Activated CD4-positive, alpha-beta memory T cell treated with anti-CD3 and anti-CD28 coated beads, Interleukin-2, amount 10 ng/mL, durations not matched to agents 7 days and 5 days (primary cell): ENCODE measurements at regions of chr16 and their contacts with region 1.

Region 1: GRCh38 chr16:50266337-50267091 is at the start of gene ADCY7:
- DNase-seq: peak; percentile 89
- H3K4me3 Mint-ChIP-seq: peak within 1 kb of the TSS; percentile 89
- H3K27ac Mint-ChIP-seq: peak within 1 kb of the TSS; percentile 91
- H3K4me1 Mint-ChIP-seq: peaks cover 82% of the 10 kb centered on the region
- H3K27me3 Mint-ChIP-seq: no peaks in the 10 kb centered on the region
- total RNA-seq, gene ADCY7: 266 to 270 TPM

Region 2: DNA sequence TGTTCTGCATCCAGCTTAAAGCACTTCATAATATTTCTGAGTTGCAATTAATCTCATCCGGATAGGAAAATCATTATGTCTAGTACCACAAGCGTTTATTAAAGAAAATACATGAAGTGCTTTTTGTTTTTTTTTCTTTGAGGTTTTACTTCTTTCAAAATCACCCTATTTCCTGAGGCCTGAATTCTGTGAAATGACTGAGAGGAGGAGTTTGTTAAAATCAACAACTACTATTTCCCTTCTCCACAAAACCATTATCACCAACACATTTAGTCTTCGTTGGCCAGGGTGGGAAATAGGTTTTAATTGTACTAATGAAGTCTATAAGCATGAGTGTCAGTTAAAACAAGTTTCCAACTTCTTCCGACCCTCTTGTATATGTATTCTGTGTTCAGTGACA is 50.8 kb before region 1 on chr16:
- CTCF ChIA-PET with region 1: interaction called, 3 read pairs
- POLR2A ChIA-PET with region 1: interaction called, 11 read pairs
- DNase-seq: no peak
- H3K4me3 Mint-ChIP-seq: peak overlapping the region; percentile 70
- H3K27ac Mint-ChIP-seq: peak overlapping the region; percentile 83
- H3K4me1 Mint-ChIP-seq: peaks cover 38% of the 10 kb centered on the region
- H3K27me3 Mint-ChIP-seq: no peaks in the 10 kb centered on the region